ENCODE measurements at regions of chr3 and their contacts with region 1.

Region 1: DNA sequence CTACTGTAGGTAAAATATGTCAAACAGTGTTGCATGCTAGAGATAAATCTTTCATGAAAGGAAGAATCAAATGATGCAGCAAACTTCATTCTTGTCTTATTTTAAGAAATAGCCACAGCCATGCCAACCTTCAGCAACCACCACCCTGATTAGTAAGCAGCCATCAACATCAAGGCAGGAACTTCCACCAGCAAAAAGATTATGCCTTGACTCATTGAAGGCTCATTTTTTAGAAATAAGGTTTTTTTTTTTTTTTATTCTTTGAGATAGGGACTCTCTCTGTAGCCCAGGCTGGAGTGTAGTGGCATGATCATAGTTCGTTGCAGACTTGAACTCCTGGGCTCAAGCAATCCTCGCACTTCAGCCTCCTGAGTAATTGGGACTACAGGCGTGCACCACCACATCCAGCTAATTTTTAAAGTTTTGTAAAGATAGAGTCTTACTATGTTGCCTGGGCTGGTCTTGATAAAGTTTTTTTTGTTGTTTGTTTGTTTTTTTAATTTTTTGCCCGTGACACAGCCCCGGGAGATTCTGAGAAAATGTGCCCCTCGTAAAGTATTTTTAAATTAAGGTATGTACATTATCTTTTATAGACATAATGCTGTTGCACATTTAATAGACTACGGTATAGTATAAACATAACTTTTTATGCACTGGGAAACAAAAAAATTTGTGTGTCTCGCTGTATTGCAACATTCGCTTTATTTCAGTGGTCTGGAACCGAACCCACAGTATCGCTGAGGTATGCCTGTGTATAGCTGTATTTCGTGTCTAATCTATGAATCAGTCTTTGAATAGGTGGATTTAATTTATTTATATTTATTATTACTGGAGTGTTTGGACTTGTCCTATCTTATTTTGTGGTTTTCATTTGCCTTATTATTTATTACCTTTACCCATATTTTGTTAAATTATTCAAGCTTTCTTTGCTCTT is 23.3 kb downstream of the SNRK start:
- DNase-seq: no peak
- ATAC-seq: no peak
- H3K4me3 ChIP-seq: no peak overlapping the region
- H3K4me3 Mint-ChIP-seq: peak overlapping the region in 9 of 10 donors; percentile 16 to 73 (median 49)
- H3K27ac ChIP-seq: no peak overlapping the region
- H3K27ac Mint-ChIP-seq: peak overlapping the region in 7 of 9 donors; percentile 1 to 80 (median 65)
- H3K4me1 ChIP-seq: peaks cover 28 to 30% of the 10 kb centered on the region in 2 donors
- H3K4me1 Mint-ChIP-seq: peaks cover 40 to 94% (median 91%) of the 10 kb centered on the region in 7 donors
- H3K27me3 ChIP-seq: no peaks in the 10 kb centered on the region
- H3K27me3 Mint-ChIP-seq: no peaks in the 10 kb centered on the region

Region 2: GRCh38 chr3:43246976-43247375 is 62.7 kb before region 1 on chr3:
- CTCF ChIA-PET with region 1: no interaction called
- POLR2A ChIA-PET with region 1: no interaction called
- intact Hi-C with region 1: no loop called
- DNase-seq: peak in 6 of 9 donors; percentile 33 to 62 (median 50)
- ATAC-seq: peak; percentile 66
- H3K4me3 ChIP-seq: no peak overlapping the region
- H3K4me3 Mint-ChIP-seq: peak overlapping the region; percentile 8 to 78 (median 61)
- H3K27ac ChIP-seq: peak overlapping the region; percentile 53
- H3K27ac Mint-ChIP-seq: peak overlapping the region; percentile 49 to 90 (median 80)
- H3K4me1 ChIP-seq: peaks cover 9 to 53% of the 10 kb centered on the region in 2 donors
- H3K4me1 Mint-ChIP-seq: peaks cover 35 to 69% (median 65%) of the 10 kb centered on the region in 7 donors
- H3K27me3 ChIP-seq: no peaks in the 10 kb centered on the region
- H3K27me3 Mint-ChIP-seq: peaks cover 0 to 4% (median 0%) of the 10 kb centered on the region in 5 donors

Region 3: DNA sequence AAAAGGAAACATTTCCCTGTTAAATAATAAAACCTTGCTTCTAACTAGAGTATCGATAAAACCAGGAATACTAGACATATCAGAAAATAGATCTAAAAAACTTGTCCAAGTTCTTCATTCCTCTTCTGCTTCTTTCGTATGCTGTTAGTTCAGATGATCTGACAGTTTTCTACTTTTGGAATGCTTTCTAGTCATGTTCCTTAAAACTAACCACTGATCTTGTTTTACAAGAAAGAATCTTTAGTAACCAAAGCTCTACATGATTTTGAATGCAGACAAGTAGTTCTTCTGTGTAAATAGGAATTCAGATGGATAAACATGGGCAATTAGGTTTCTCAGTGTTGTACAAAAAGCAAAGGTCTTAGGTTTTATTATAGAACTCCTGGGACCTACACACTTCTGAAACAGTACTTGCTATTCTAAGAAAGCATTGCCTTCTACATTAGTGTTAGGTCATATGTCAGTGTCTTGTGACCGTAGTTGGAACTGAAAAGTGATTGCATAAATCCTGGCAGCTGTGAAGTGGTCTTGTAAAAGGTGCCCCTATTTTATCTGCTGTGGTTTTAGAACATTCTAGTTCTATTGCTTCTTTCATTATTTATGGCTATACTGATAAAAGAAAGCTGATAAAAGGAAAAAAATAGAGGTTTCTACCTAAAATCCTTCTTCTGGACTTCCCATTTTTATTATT is 17.4 kb after region 1 on chr3:
- CTCF ChIA-PET with region 1: no interaction called
- POLR2A ChIA-PET with region 1: interaction called, 4 read pairs
- intact Hi-C with region 1: loop called in 1 of 2 experiments (anchors 2 kb)
- DNase-seq: no peak
- ATAC-seq: peak; percentile 59
- H3K4me3 ChIP-seq: no peak overlapping the region
- H3K4me3 Mint-ChIP-seq: peak overlapping the region; percentile 14 to 68 (median 62)
- H3K27ac ChIP-seq: peak overlapping the region; percentile 51
- H3K27ac Mint-ChIP-seq: peak overlapping the region; percentile 51 to 91 (median 79)
- H3K4me1 ChIP-seq: peaks cover 40% of the 10 kb centered on the region in 2 donors
- H3K4me1 Mint-ChIP-seq: peaks cover 43 to 97% (median 92%) of the 10 kb centered on the region in 7 donors
- H3K27me3 ChIP-seq: no peaks in the 10 kb centered on the region
- H3K27me3 Mint-ChIP-seq: no peaks in the 10 kb centered on the region